Heart left ventricle (tissue), 16 donors: ENCODE measurements at regions of chr5 and their contacts with region 1.

Region 1: DNA sequence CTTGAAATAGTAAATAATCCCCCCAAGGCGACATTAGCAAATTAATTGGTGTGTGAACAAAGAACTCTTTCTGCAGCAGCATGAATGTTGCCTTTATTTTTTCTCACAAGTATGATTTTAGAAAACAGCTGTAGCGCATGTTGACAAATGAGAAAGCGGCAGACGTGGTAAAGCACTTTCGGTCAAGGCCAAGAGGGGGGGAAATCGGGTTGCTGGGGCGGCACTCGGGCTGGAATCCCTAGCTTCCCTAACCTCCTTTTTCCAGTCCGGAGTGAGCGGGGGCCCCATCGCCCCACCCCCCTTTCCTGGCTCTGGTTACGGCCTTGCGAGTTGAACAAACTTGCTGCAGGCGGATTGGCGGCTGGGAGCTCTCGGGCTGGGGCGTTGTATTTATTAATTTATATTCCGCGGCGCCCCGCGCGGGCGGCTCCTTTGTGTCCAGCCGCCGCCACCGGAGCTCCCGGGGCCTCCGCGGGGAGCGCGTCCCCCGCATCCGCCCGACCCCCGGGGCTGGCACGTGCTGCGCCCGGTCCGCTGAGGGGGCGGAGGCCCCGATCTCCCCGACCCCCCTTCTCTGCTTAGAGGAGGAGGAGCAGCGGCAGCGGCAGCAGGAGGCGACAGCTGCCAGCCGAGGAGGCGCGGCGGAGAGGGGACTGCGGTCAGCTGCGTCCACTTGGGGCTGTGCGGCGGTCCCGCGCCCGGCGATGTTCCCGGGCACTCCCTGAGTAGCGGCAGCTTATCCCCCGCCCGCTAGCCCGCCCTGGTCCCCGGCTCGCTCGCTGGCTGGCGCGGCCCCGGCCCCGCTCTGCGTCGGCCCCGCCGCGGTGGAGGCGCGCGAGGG is at the start of gene RHOBTB3:
- DNase-seq: peak; percentile 90 to 95 (median 92)
- ATAC-seq: peak; percentile 50 to 88 (median 79)
- H3K4me3 ChIP-seq: peak within 1 kb of the TSS; percentile 62 to 96 (median 76)
- H3K27ac ChIP-seq: peak within 1 kb of the TSS; percentile 84 to 98 (median 94)
- H3K4me1 ChIP-seq: peaks cover 0 to 71% (median 40%) of the 10 kb centered on the region in 12 donors
- H3K27me3 ChIP-seq: no peaks in the 10 kb centered on the region
- CTCF ChIP-seq: peak in 3 of 12 donors; percentile 17 to 22 (median 20)
- POLR2A ChIP-seq: peak in 1 of 2 donors; percentile 74
- total RNA-seq, gene RHOBTB3: 62.9 to 116 (median 86.7) TPM

Region 2: GRCh38 chr5:95664204-95664786 is 66.7 kb before region 1 on chr5:
- intact Hi-C with region 1: loop called in 8 of 10 experiments (anchors 2 to 5 kb)
- DNase-seq: no peak
- ATAC-seq: peak in 2 of 4 donors; percentile 39 to 45
- H3K4me3 ChIP-seq: no peak overlapping the region
- H3K27ac ChIP-seq: peak overlapping the region in 3 of 12 donors; percentile 26 to 37 (median 34)
- H3K4me1 ChIP-seq: peaks cover 0 to 25% (median 9%) of the 10 kb centered on the region in 12 donors
- H3K27me3 ChIP-seq: no peaks in the 10 kb centered on the region
- CTCF ChIP-seq: peak; percentile 65 to 89 (median 83)
- POLR2A ChIP-seq: no peak

Region 3: GRCh38 chr5:95669540-95669939 is 61.4 kb before region 1 on chr5:
- intact Hi-C with region 1: loop called in 9 of 10 experiments (anchors 2 to 5 kb)
- DNase-seq: peak; percentile 63 to 84 (median 78)
- ATAC-seq: peak; percentile 92 to 98 (median 98)
- H3K4me3 ChIP-seq: no peak overlapping the region
- H3K27ac ChIP-seq: peak overlapping the region in 11 of 12 donors; percentile 29 to 81 (median 53)
- H3K4me1 ChIP-seq: peaks cover 0 to 38% (median 18%) of the 10 kb centered on the region in 12 donors
- H3K27me3 ChIP-seq: no peaks in the 10 kb centered on the region
- CTCF ChIP-seq: no peak
- POLR2A ChIP-seq: no peak